ENCODE measurements at regions of chr17 and their contacts with region 1.

Region 1: GRCh38 chr17:43766413-43767052 is 7.9 kb upstream of the SOST start:
- DNase-seq: peak in 1 of 2 experiments; percentile 86
- H3K4me3 ChIP-seq: no peak overlapping the region
- H3K27ac ChIP-seq: no peak overlapping the region
- H3K4me1 ChIP-seq: no peaks in the 10 kb centered on the region
- H3K27me3 ChIP-seq: no peaks in the 10 kb centered on the region
- CTCF ChIP-seq: peak; percentile 77 to 88 (median 84)
- EP300 ChIP-seq: no peak
- POLR2A ChIP-seq: no peak
- RAD21 ChIP-seq: peak; percentile 62 to 67

Region 2: GRCh38 chr17:43680461-43680860 is 86.1 kb before region 1 on chr17:
- CTCF ChIA-PET with region 1: interaction called, 20 read pairs
- POLR2A ChIA-PET with region 1: no interaction called
- DNase-seq: no peak
- H3K4me3 ChIP-seq: no peak overlapping the region
- H3K27ac ChIP-seq: no peak overlapping the region
- H3K4me1 ChIP-seq: peaks cover 0 to 22% (median 9%) of the 10 kb centered on the region in 4 experiments; a peak in 6 of 7 replicates
- H3K27me3 ChIP-seq: 0 out of 7 replicates have a peak, but pooled peaks cover 0 to 2% (median 0%) of the 10 kb centered on the region in 4 experiments
- CTCF ChIP-seq: peak in 1 of 3 experiments; percentile 4; a peak in 1 of 4 replicates
- EP300 ChIP-seq: no peak
- POLR2A ChIP-seq: no peak
- RAD21 ChIP-seq: no peak

Region 3: GRCh38 chr17:43694077-43694870 is 72.3 kb before region 1 on chr17:
- CTCF ChIA-PET with region 1: interaction called, 969 read pairs
- POLR2A ChIA-PET with region 1: interaction called, 5 read pairs
- DNase-seq: peak in 1 of 2 experiments; percentile 85
- H3K4me3 ChIP-seq: no peak overlapping the region; a peak in 1 of 8 replicates
- H3K27ac ChIP-seq: no peak overlapping the region
- H3K4me1 ChIP-seq: peaks cover 0 to 6% (median 4%) of the 10 kb centered on the region in 4 experiments; a peak in 3 of 7 replicates
- H3K27me3 ChIP-seq: no peaks in the 10 kb centered on the region
- CTCF ChIP-seq: peak; percentile 65 to 98 (median 83)
- EP300 ChIP-seq: no peak
- POLR2A ChIP-seq: no peak
- RAD21 ChIP-seq: peak; percentile 95 to 98

Region 4: DNA sequence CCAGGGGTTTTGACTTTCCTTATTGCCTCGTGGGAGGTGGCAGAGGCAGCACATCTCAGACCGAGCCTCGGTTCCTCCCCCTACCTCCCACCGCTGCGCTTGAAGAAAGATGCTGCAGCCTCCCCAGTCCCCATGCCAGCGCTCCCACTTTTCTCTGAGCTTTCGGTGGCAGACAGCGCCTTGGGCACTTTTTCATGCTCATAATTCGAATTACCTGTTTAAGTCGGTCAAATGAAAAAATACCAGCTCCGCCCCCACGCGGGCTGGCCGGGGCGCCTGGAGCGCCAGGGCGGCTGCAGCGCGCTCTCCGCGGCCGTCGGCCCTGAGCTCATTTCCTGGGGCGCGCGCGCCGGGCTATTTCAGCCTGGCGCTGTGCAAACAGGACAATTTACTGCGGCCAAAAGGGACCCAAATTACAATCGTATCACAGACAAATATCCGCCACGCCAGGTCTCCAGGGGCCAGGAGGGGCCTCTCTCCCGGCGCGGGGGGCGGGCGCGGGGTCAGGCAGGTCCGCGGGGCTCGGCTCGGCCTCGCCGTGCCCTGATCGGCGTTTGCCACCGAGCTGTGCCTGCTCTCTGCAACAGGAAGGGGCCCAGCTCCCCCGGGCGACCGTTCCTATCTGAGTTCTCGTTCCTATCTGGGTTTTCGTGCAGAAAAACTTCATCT is 52.9 kb before region 1 on chr17:
- CTCF ChIA-PET with region 1: interaction called, 969 read pairs
- POLR2A ChIA-PET with region 1: interaction called, 4 read pairs
- DNase-seq: peak in 1 of 2 experiments; percentile 70
- H3K4me3 ChIP-seq: peak overlapping the region; percentile 47 to 72 (median 51); a peak in 7 of 8 replicates
- H3K27ac ChIP-seq: no peak overlapping the region
- H3K4me1 ChIP-seq: peaks cover 0 to 2% (median 0%) of the 10 kb centered on the region in 4 experiments; a peak in 2 of 7 replicates
- H3K27me3 ChIP-seq: peaks cover 10 to 28% (median 24%) of the 10 kb centered on the region in 4 experiments
- CTCF ChIP-seq: no peak
- EP300 ChIP-seq: no peak
- POLR2A ChIP-seq: no peak
- RAD21 ChIP-seq: no peak

Region 5: GRCh38 chr17:43753493-43754129 is 12.9 kb before region 1 on chr17:
- CTCF ChIA-PET with region 1: interaction called, 90 read pairs
- POLR2A ChIA-PET with region 1: no interaction called
- DNase-seq: no peak
- H3K4me3 ChIP-seq: no peak overlapping the region
- H3K27ac ChIP-seq: no peak overlapping the region
- H3K4me1 ChIP-seq: peaks cover 0 to 13% (median 4%) of the 10 kb centered on the region in 4 experiments; a peak in 5 of 7 replicates
- H3K27me3 ChIP-seq: peaks cover 0 to 27% (median 23%) of the 10 kb centered on the region in 4 experiments; a peak in 6 of 7 replicates
- CTCF ChIP-seq: no peak
- EP300 ChIP-seq: no peak
- POLR2A ChIP-seq: no peak
- RAD21 ChIP-seq: no peak

Region 6: DNA sequence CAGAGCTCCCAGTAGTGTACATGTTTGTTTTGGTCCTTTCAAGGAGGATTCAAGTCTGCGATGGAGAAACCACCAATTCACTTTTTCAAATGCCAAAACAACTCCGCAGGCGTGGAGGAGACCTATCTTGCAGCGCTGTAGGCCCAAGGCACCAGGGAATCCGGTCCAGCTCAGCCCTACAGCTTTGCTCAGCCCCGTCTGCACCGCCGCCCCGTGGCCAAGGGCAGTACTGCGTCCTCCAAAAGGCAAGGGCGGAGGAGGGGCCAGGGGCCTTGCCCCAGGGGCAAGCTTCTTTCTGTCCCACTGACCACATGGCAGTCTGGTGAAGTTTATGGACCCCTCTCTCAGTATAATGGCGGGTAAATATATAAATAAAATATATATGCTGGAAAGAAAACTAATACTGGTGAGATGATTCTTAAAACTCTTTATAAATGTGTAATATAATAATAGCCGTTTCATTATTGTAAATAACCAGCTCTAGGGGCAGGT is 79.7 kb after region 1 on chr17:
- CTCF ChIA-PET with region 1: interaction called, 13 read pairs
- POLR2A ChIA-PET with region 1: no interaction called
- DNase-seq: peak; percentile 77 to 100
- H3K4me3 ChIP-seq: peak overlapping the region in 1 of 4 experiments; percentile 46; a peak in 1 of 8 replicates
- H3K27ac ChIP-seq: no peak overlapping the region
- H3K4me1 ChIP-seq: peaks cover 0 to 5% (median 1%) of the 10 kb centered on the region in 4 experiments; a peak in 2 of 7 replicates
- H3K27me3 ChIP-seq: peaks cover 0 to 3% (median 0%) of the 10 kb centered on the region in 4 experiments; a peak in 2 of 7 replicates
- CTCF ChIP-seq: peak; percentile 97 to 98 (median 97)
- EP300 ChIP-seq: no peak
- POLR2A ChIP-seq: no peak
- RAD21 ChIP-seq: peak; percentile 80 to 92

Region 7: GRCh38 chr17:43983515-43984411 is 217.2 kb after region 1 on chr17:
- CTCF ChIA-PET with region 1: no interaction called
- POLR2A ChIA-PET with region 1: no interaction called
- DNase-seq: peak in 1 of 2 experiments; percentile 82
- H3K4me3 ChIP-seq: peak overlapping the region; percentile 53 to 75 (median 60)
- H3K27ac ChIP-seq: no peak overlapping the region
- H3K4me1 ChIP-seq: peaks cover 0 to 4% (median 2%) of the 10 kb centered on the region in 4 experiments; a peak in 4 of 7 replicates
- H3K27me3 ChIP-seq: peaks cover 0 to 5% (median 4%) of the 10 kb centered on the region in 4 experiments; a peak in 3 of 7 replicates
- CTCF ChIP-seq: peak; percentile 63 to 85 (median 80)
- EP300 ChIP-seq: no peak
- POLR2A ChIP-seq: no peak
- RAD21 ChIP-seq: peak; percentile 24 to 53